Left ventricle myocardium inferior (tissue), 1 donor: ENCODE measurements at regions of chr1 and their contacts with region 1.

Region 1: DNA sequence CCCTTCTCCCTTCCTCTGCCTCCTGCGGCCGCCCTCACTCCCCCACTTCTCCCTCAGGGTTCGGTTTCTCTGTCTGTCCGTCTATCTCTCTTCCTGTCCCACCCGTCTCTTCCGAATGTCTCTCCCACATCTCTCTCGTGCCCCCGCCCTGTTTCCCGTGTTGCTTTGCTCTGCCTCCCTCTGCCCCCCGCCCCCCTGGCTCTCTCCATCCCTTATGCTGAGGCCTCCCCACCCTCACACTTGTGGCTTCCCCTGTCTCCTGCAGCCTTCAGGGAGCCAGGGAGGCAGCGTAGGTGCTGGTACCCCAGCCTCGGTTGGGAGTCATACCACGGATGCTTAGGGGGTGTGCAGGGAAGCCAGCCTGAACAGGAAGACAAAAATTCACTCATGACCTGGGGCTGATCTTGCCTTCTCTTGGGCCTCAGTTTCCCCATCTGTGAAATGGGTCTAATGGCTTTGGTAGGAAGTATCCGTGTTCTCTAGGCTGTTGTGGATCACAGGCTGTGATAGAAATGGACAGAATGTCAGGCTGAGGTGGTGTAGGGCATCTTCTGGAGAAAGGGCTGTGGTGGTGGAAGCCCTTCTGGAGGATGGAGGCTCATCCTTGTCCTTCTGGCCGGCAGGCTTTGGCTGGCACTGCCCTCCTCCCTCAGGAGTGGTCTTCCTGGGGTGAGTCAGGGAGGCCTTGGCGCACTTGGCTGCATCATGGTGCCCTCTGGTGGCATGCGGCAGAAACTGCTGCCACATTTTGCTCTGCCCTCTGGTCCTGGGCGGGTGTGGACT is 55.5 kb downstream of the FOXO6 start:
- DNase-seq: peak; percentile 61
- H3K4me3 ChIP-seq: no peak overlapping the region
- H3K27ac ChIP-seq: no peak overlapping the region
- H3K4me1 ChIP-seq: peaks cover 22% of the 10 kb centered on the region
- H3K27me3 ChIP-seq: peaks cover 4% of the 10 kb centered on the region
- CTCF ChIP-seq: peak; percentile 92

Region 2: GRCh38 chr1:41268154-41268770 is 148.5 kb before region 1 on chr1:
- intact Hi-C with region 1: loop called (anchors 5 kb)
- DNase-seq: peak; percentile 66
- H3K4me3 ChIP-seq: no peak overlapping the region
- H3K27ac ChIP-seq: no peak overlapping the region
- H3K4me1 ChIP-seq: peaks cover 4% of the 10 kb centered on the region
- H3K27me3 ChIP-seq: no peaks in the 10 kb centered on the region
- CTCF ChIP-seq: peak; percentile 100

Region 3: DNA sequence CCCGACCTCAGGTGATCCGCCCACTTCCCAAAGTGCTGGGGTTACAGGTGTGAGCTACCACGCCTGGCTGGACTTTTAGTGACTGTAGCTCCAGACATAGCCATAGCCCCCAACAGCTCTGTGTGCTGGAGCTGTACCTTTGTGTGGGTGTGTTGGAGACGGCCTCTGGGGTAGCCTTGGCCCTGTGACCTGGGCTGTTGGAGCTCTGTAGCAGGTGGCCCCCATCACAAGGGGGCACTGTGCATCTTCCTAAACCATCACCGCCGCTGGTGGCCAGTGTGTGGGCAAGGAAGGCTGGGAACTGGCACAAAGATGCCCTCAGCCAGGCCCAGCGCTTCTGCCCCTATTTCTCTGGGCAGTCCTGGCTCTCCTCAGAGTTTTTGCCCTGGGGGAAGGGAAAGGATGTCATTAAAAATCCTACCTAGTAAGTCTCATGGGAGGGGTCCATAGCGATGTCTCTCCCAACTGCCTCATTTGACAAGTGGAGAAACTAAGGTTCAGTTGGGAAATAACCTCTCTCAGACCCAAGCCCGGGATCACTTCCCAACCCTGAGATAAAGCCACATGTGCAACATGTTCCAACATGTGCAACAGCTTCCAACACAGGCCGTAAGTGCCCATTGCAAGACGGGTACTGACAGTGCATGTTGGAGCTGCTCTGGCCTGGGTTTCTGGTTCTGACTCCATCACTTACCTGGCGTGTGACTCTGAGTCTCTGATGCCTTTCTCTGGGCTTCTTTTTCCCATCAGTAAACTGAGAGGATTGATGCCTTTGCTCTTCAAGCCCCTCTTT is 93.7 kb before region 1 on chr1:
- intact Hi-C with region 1: loop called (anchors 5 kb)
- DNase-seq: peak; percentile 44
- H3K4me3 ChIP-seq: no peak overlapping the region
- H3K27ac ChIP-seq: no peak overlapping the region
- H3K4me1 ChIP-seq: peaks cover 19% of the 10 kb centered on the region
- H3K27me3 ChIP-seq: peaks cover 6% of the 10 kb centered on the region
- CTCF ChIP-seq: peak; percentile 69